A549 (cell line): ENCODE measurements at regions of chr20 and their contacts with region 1.

Region 1: DNA sequence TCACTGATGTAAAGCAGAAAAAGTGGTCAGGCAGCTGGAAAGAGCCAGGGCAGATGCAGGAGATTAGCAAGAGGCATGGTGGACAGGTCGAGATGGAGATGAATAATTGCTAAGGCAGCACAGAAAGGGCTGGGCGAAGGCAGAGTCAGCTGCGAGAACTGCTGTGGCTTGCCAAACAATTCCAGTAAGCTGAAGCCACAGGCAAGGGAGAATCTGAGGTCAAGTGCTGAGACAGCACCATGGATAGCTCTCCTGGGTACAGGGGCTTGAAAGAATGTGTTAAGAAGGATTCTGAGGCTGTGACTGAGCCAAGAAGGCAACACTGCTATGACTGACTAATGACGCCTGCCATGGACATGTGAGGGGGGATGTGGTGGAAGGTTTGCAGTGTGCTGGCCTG is 220.8 kb upstream of the FOXA2 start:
- DNase-seq: peak; percentile 33 to 80
- ATAC-seq: peak; percentile 49 to 62; a peak in 4 of 6 replicates
- H3K4me3 ChIP-seq: no peak overlapping the region
- H3K27ac ChIP-seq: peak overlapping the region; percentile 74 to 77; a peak in 5 of 6 replicates
- H3K4me1 ChIP-seq: peaks cover 51% of the 10 kb centered on the region
- CTCF ChIP-seq: no peak
- EP300 ChIP-seq: no peak
- POLR2A ChIP-seq: no peak
- RAD21 ChIP-seq: no peak

Region 2: GRCh38 chr20:22815603-22816315 is 10.5 kb after region 1 on chr20:
- CTCF ChIA-PET with region 1: interaction called, 15 read pairs
- POLR2A ChIA-PET with region 1: no interaction called
- DNase-seq: peak in 1 of 2 experiments; percentile 47
- ATAC-seq: peak; percentile 73 to 88; a peak in 5 of 6 replicates
- H3K4me3 ChIP-seq: no peak overlapping the region
- H3K27ac ChIP-seq: peak overlapping the region; percentile 6 to 40; a peak in 4 of 6 replicates
- H3K4me1 ChIP-seq: no peaks in the 10 kb centered on the region
- CTCF ChIP-seq: no peak
- EP300 ChIP-seq: no peak
- POLR2A ChIP-seq: no peak
- RAD21 ChIP-seq: no peak; a peak in 1 of 5 replicates